ENCODE measurements at regions of chr1 and their contacts with region 1.

Region 1: GRCh38 chr1:109773146-109773899 is 9.6 kb upstream of the EPS8L3 start:
- DNase-seq: peak; percentile 73 to 78
- ATAC-seq: peak; percentile 82 to 88
- H3K4me3 ChIP-seq: no peak overlapping the region
- H3K27ac ChIP-seq: peak overlapping the region; percentile 3 to 77; a peak in 3 of 6 replicates
- H3K4me1 ChIP-seq: peaks cover 35% of the 10 kb centered on the region
- CTCF ChIP-seq: peak; percentile 70
- EP300 ChIP-seq: no peak
- POLR2A ChIP-seq: no peak
- RAD21 ChIP-seq: peak; percentile 87 to 91

Region 2: DNA sequence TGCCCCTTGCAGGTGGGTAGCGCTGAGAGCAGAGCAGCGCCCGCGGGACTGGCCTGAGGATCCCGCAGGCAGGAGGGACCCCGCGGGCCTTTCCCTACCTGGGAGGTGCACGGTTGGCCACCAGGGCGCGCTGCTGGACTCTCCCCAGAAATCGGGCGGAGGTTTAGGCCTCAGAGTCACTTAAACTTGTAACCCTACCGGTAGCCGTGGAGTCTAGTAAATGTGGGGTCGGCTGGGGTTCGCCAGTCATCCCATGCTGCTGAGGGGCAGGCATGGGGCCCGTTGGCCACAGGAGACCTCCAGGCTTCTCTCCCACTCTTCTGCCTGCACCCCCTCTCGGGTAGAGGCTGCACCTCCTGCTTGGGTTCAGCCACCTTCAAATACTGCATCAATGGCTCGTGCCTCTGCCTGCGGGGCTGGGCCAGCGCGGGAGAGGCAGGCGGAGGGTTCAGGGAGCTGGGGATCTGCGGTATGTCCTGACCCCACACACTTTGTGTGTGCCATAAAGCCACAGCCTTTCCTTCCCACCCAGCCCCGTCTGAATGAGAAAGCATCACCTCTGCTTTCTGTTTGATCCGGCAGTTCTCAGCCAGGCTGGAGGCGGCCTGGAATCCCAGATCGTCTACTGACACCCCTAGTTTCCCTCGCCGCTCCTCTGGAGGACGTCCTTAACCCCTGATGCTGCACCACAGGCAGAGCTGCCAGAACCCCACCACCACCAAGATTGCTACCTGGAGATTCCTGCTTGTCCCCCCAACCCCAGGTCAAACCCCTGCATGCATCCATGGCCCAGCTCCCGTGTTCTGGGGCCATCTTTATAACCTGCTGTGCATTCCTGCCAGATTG is 129.7 kb before region 1 on chr1:
- CTCF ChIA-PET with region 1: interaction called, 295 read pairs
- POLR2A ChIA-PET with region 1: interaction called, 4 read pairs
- DNase-seq: peak; percentile 59 to 75
- ATAC-seq: peak; percentile 96 to 98
- H3K4me3 ChIP-seq: no peak overlapping the region
- H3K27ac ChIP-seq: peak overlapping the region; percentile 73 to 80
- H3K4me1 ChIP-seq: peaks cover 9% of the 10 kb centered on the region; the same call in 2 of the 3 replicates
- CTCF ChIP-seq: peak; percentile 76
- EP300 ChIP-seq: no peak
- POLR2A ChIP-seq: no peak
- RAD21 ChIP-seq: peak; percentile 67 to 74

Region 3: DNA sequence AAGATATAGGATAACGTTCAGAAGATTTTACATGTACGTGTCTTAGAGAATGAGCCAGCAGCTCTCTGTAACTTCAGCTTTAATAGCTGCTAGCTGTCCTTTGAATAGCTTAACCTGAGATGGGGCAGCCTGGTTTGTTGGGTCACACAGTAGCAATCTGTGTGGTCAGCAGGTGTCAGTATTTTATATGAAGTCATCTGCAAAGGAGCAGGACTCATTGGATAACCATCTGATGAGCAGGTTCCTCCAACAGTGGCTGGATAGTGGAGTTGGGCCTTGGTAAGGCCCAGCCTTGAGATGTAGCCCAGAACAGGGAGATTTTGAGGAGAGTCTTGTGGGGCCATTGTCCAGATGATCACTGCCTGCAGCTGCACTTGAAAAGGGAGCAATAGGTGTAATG is 54.8 kb before region 1 on chr1:
- CTCF ChIA-PET with region 1: interaction called, 13 read pairs
- POLR2A ChIA-PET with region 1: no interaction called
- DNase-seq: peak; percentile 17 to 66
- ATAC-seq: peak; percentile 66 to 80; a peak in 4 of 6 replicates
- H3K4me3 ChIP-seq: no peak overlapping the region
- H3K27ac ChIP-seq: peak overlapping the region; percentile 63 to 85
- H3K4me1 ChIP-seq: peaks cover 14% of the 10 kb centered on the region; the same call in 2 of the 3 replicates
- CTCF ChIP-seq: peak; percentile 25; the same call in 1 of the 3 replicates
- EP300 ChIP-seq: no peak
- POLR2A ChIP-seq: no peak
- RAD21 ChIP-seq: peak in 1 of 2 experiments; percentile 52; a peak in 4 of 5 replicates

Region 4: GRCh38 chr1:109790735-109791494 is 17.6 kb after region 1 on chr1:
- CTCF ChIA-PET with region 1: interaction called, 157 read pairs
- POLR2A ChIA-PET with region 1: no interaction called
- DNase-seq: peak in 1 of 2 experiments; percentile 61
- ATAC-seq: no peak
- H3K4me3 ChIP-seq: no peak overlapping the region
- H3K27ac ChIP-seq: peak overlapping the region; percentile 98
- H3K4me1 ChIP-seq: peaks cover 74% of the 10 kb centered on the region
- CTCF ChIP-seq: no peak
- EP300 ChIP-seq: no peak
- POLR2A ChIP-seq: no peak
- RAD21 ChIP-seq: no peak; a peak in 1 of 5 replicates

Region 5: GRCh38 chr1:109910123-109910962 is 137.0 kb after region 1 on chr1 and contains the start of gene CSF1:
- CTCF ChIA-PET with region 1: interaction called, 22 read pairs
- POLR2A ChIA-PET with region 1: no interaction called
- DNase-seq: peak; percentile 42 to 78
- ATAC-seq: peak; percentile 74 to 79
- H3K4me3 ChIP-seq: peak within 1 kb of the TSS; percentile 99
- H3K27ac ChIP-seq: peak within 1 kb of the TSS; percentile 100
- H3K4me1 ChIP-seq: peaks cover 42% of the 10 kb centered on the region
- CTCF ChIP-seq: no peak
- EP300 ChIP-seq: no peak
- POLR2A ChIP-seq: no peak
- RAD21 ChIP-seq: peak in 1 of 2 experiments; percentile 40; a peak in 2 of 5 replicates
- polyA plus RNA-seq, gene CSF1: 36.3 and 45.7 TPM in 2 replicates

Region 6: GRCh38 chr1:109959974-109960744 is 186.8 kb after region 1 on chr1:
- CTCF ChIA-PET with region 1: interaction called, 33 read pairs
- POLR2A ChIA-PET with region 1: no interaction called
- DNase-seq: peak; percentile 87 to 96
- ATAC-seq: peak; percentile 96 to 98
- H3K4me3 ChIP-seq: no peak overlapping the region
- H3K27ac ChIP-seq: peak overlapping the region; percentile 95 to 96
- H3K4me1 ChIP-seq: peaks cover 52% of the 10 kb centered on the region
- CTCF ChIP-seq: peak; percentile 27; the same call in 1 of the 3 replicates
- EP300 ChIP-seq: peak; percentile 15 to 84; a peak in 3 of 5 replicates
- POLR2A ChIP-seq: no peak
- RAD21 ChIP-seq: peak; percentile 46 to 47

Region 7: GRCh38 chr1:110254996-110255787 is 481.9 kb after region 1 on chr1:
- CTCF ChIA-PET with region 1: no interaction called
- POLR2A ChIA-PET with region 1: no interaction called
- DNase-seq: no peak
- ATAC-seq: no peak
- H3K4me3 ChIP-seq: no peak overlapping the region
- H3K27ac ChIP-seq: no peak overlapping the region
- H3K4me1 ChIP-seq: no peaks in the 10 kb centered on the region
- CTCF ChIP-seq: no peak
- EP300 ChIP-seq: no peak
- POLR2A ChIP-seq: no peak
- RAD21 ChIP-seq: no peak

Measured in A549 (cell line).